ENCODE measurements at regions of chr4 and their contacts with region 1.

Region 1: GRCh38 chr4:167642250-167642649 is 408.0 kb upstream of the SPOCK3 start:
- DNase-seq: no peak
- H3K4me3 ChIP-seq: no peak overlapping the region
- H3K27ac ChIP-seq: no peak overlapping the region
- H3K27me3 ChIP-seq: no peaks in the 10 kb centered on the region
- CTCF ChIP-seq: no peak

Region 2: GRCh38 chr4:167622481-167623246 is 19.6 kb before region 1 on chr4:
- CTCF ChIA-PET with region 1: interaction called, 10 read pairs
- POLR2A ChIA-PET with region 1: no interaction called
- DNase-seq: peak; percentile 3
- H3K4me3 ChIP-seq: no peak overlapping the region
- H3K27ac ChIP-seq: no peak overlapping the region
- H3K27me3 ChIP-seq: no peaks in the 10 kb centered on the region
- CTCF ChIP-seq: peak; percentile 81

Measured in AG04450 (cell line).